IMR-90 (cell line): ENCODE measurements at regions of chr14 and their contacts with region 1.

Region 1: DNA sequence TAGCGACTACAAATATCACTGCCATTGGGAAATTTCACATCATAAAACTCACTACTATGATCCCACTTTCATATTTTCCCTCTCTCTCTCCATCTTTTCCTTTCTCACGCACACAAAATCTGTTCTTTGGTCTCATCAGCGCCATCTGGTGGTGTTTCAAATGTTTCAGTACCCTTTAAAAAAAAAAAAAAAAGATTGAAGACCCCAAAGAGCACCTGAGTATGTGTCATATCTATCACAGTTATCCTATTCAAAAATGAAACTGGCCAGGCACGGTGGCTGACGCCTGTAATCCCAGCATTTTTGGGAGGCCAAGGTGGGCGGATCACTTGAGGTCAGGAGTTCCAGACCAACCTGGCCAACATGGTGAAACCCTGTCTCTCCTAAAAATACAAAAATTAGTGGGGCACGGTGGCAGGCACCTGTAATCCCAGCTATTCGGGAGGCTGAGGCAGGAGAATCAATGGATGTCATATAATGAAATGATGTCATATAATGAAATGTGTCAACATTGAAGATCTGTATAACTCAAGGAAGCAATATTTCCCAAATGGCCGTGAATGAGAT is 72.4 kb downstream of the TTC9 start:
- DNase-seq: peak; percentile 63
- ATAC-seq: no peak
- H3K4me3 ChIP-seq: no peak overlapping the region
- H3K27ac ChIP-seq: no peak overlapping the region
- H3K4me1 ChIP-seq: no peaks in the 10 kb centered on the region
- H3K27me3 ChIP-seq: peaks cover 26% of the 10 kb centered on the region
- CTCF ChIP-seq: peak; percentile 58
- POLR2A ChIP-seq: no peak
- RAD21 ChIP-seq: peak; percentile 44

Region 2: DNA sequence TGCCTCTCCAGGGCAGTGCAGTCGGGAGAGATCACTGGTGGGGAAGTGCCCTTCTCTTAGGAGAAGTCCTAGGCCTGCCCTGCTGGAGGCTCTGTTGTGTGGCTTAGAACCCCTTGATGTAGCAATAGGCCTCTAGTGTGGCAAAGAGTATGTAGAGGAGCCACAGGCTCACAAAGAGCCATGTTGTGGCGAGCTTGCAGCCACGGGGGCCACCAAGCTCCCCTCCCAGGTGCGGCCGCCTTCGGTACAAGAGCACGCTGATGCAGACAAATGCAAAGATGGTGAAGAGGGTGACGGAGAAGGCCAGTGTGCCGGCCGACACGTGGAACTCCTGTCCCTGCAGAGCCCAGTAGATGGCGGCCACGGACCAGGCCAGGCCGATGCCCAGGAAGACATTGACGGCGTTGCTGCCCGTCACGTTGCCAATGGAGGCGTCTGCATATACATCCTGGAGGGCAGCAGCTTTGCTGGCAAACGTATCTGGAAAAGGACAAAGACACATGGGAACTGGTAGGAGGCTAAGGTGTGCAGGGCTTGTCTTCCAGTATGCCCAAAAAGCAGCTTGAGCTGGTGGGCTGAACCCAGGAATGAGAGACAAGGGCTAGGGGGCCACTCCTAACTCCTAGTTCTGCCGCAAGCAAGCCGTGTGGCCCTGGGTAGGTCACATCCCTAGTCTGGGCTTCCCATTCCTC is 668.1 kb before region 1 on chr14:
- CTCF ChIA-PET with region 1: no interaction called
- POLR2A ChIA-PET with region 1: no interaction called
- dilution Hi-C with region 1: no loop called
- in situ Hi-C with region 1: no loop called
- intact Hi-C with region 1: loop called (anchors 1 kb)
- DNase-seq: peak; percentile 48
- ATAC-seq: peak; percentile 99
- H3K4me3 ChIP-seq: no peak overlapping the region
- H3K27ac ChIP-seq: no peak overlapping the region
- H3K4me1 ChIP-seq: no peaks in the 10 kb centered on the region
- H3K27me3 ChIP-seq: peaks cover 5% of the 10 kb centered on the region
- CTCF ChIP-seq: peak; percentile 62
- POLR2A ChIP-seq: no peak
- RAD21 ChIP-seq: peak; percentile 77

Region 3: DNA sequence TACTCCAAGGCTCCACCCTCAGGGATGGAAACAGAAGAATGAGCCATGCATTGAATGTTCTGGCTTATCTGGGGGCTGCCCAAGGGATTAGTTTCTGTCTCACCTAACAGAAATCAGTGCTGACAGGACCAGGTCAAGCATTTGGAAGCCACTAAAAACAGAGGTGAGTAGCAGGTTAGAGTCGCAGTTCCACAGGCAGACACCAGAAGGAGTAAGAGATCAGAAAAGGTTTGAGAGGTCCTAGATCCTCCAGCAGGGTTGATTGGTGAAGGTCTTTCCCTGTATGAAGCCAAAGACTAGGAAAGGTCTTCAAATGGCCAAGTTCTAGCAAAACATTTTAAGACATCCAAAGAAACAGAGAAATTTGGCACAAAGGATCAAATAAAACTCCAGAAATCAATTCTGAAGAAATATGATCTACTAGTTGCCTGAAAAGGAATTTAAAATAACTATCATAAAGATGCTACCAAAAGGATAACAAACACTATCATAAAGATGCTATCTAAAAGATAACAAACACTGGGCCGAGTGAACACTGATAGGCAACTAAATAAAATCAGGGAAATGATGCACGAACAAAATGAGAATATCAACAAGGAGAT is 91.9 kb before region 1 on chr14:
- CTCF ChIA-PET with region 1: no interaction called
- POLR2A ChIA-PET with region 1: no interaction called
- dilution Hi-C with region 1: no loop called
- in situ Hi-C with region 1: no loop called
- intact Hi-C with region 1: loop called (anchors 1 kb)
- DNase-seq: peak; percentile 21
- ATAC-seq: peak; percentile 63; the same call in 1 of the 2 replicates
- H3K4me3 ChIP-seq: no peak overlapping the region
- H3K27ac ChIP-seq: no peak overlapping the region
- H3K4me1 ChIP-seq: no peaks in the 10 kb centered on the region
- H3K27me3 ChIP-seq: peaks cover 2% of the 10 kb centered on the region; the same call in 1 of the 2 replicates
- CTCF ChIP-seq: peak; percentile 56
- POLR2A ChIP-seq: no peak
- RAD21 ChIP-seq: peak; percentile 63

Region 4: DNA sequence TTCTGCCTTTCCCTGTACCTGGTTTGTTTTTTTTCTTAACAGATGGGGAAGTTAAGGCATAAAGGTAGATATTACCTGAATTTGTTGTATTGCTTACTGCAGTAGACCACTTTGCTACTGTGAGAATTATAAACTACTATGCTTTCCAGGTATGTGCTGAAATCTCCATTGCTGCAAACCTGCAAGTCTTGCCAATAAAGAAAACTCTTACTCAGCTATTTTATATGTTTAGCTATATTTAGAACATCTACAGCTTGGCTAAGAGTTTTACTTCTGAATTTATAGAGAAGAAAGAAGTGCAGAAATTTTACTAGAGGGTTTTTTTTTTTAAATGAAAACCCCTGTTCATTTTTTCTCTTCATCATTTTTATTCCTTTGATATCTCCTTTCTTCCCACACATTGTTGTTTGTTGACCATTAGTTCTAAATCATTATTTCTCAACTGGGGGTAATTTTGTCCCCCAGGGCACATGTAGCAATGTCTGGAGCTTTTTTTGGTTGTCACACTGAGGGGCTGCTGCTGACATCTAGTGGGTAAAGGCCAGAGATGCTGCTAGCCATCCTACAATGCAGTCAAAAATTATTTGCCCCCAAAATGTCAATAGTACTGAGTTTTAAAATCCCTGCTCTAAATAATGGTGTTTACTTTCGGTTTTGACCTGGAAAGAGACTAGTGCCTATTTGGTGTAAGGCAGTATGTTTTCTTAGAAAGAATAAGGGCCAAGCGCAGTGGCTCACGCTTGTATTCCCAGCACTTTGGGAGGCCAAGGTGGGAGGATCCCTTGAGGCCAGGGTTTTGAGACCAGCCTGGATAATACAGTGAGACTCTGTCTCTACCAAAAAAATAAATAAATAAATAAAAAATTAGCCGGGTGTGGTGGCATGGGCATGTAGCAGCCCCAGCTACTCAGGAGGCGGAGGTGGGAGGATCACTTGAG is 241.7 kb after region 1 on chr14:
- CTCF ChIA-PET with region 1: no interaction called
- POLR2A ChIA-PET with region 1: no interaction called
- dilution Hi-C with region 1: no loop called
- in situ Hi-C with region 1: no loop called
- intact Hi-C with region 1: loop called (anchors 5 kb)
- DNase-seq: peak; percentile 26
- ATAC-seq: peak; percentile 79; the same call in 1 of the 2 replicates
- H3K4me3 ChIP-seq: no peak overlapping the region
- H3K27ac ChIP-seq: no peak overlapping the region
- H3K4me1 ChIP-seq: no peaks in the 10 kb centered on the region
- H3K27me3 ChIP-seq: no peaks in the 10 kb centered on the region
- CTCF ChIP-seq: peak; percentile 69
- POLR2A ChIP-seq: no peak
- RAD21 ChIP-seq: peak; percentile 84

Region 5: DNA sequence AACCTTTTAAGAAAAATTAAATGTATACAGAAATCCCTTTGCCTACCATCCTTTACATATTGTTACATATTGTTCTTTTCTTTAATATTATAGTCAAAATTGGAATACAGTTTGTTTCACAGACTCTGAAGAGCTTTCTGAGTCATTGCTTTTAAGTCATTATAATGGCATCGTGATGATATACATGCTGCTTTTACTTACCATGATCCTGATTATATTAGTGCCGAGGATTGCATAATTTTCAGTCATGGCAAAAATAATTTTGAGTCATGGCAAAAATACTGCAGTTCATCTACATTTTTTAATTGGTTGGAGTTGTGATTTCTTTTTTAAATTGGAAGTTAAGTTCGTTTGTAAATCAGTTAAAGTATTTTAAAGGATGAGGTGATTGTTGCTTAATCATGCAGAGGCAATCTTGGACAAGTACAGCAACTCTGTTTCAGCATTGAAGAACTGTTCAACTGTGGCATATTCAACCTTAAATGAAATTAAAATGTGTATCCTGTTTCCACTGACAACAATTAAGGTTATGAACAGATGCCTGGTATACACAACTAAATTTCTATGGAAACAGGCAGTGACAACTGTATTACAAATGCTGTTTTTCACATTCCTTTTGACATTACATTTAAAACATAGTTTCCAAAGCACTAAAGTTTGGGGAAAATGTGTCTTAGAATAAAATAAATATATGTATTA is 335.4 kb after region 1 on chr14:
- CTCF ChIA-PET with region 1: no interaction called
- POLR2A ChIA-PET with region 1: interaction called, 10 read pairs
- dilution Hi-C with region 1: no loop called
- in situ Hi-C with region 1: no loop called
- intact Hi-C with region 1: no loop called
- DNase-seq: peak; percentile 79
- ATAC-seq: peak; percentile 76
- H3K4me3 ChIP-seq: no peak overlapping the region
- H3K27ac ChIP-seq: peak overlapping the region; percentile 44; the same call in 1 of the 2 replicates
- H3K4me1 ChIP-seq: peaks cover 2% of the 10 kb centered on the region; the same call in 1 of the 2 replicates
- H3K27me3 ChIP-seq: no peaks in the 10 kb centered on the region
- CTCF ChIP-seq: no peak
- POLR2A ChIP-seq: no peak
- RAD21 ChIP-seq: no peak